Naive thymus-derived CD4-positive, alpha-beta T cell (primary cell): ENCODE measurements at regions of chrX and their contacts with region 1.

Region 1: DNA sequence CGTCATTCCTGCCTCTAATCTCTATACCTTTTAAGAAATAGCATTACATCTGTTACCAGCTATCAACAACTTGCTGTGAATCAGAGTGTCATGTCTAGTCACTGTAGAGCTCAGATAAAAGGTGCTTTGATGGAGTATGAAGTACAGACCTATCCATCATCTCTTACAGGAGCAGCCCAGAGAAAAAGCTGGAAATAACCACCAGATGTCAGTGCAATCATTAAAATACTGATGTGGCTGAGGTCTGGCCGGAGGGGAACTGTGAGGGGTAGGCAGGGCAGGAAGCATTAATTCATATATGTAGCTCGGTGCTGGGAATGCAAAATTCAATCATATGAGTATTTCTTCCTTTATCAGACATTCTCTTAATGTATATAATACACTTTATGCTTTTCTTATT is 100.6 kb downstream of the AKAP4 start:
- DNase-seq: peak in 2 of 9 donors; percentile 2
- ATAC-seq: no peak
- H3K4me3 ChIP-seq: no peak overlapping the region
- H3K4me3 Mint-ChIP-seq: no peak overlapping the region
- H3K27ac ChIP-seq: no peak overlapping the region
- H3K27ac Mint-ChIP-seq: peak overlapping the region in 1 of 9 donors; percentile 1
- H3K4me1 ChIP-seq: no peaks in the 10 kb centered on the region
- H3K4me1 Mint-ChIP-seq: peaks cover 0 to 4% (median 0%) of the 10 kb centered on the region in 7 donors
- H3K27me3 ChIP-seq: no peaks in the 10 kb centered on the region
- H3K27me3 Mint-ChIP-seq: no peaks in the 10 kb centered on the region

Region 2: GRCh38 chrX:50579955-50580354 is 479.8 kb after region 1 on chrX:
- CTCF ChIA-PET with region 1: no interaction called
- POLR2A ChIA-PET with region 1: no interaction called
- intact Hi-C with region 1: loop called in 1 of 2 experiments (anchors 5 kb)
- DNase-seq: peak in 6 of 9 donors; percentile 7 to 45 (median 27)
- ATAC-seq: no peak
- H3K4me3 ChIP-seq: no peak overlapping the region
- H3K4me3 Mint-ChIP-seq: no peak overlapping the region
- H3K27ac ChIP-seq: no peak overlapping the region
- H3K27ac Mint-ChIP-seq: peak overlapping the region in 1 of 9 donors; percentile 2
- H3K4me1 ChIP-seq: no peaks in the 10 kb centered on the region
- H3K4me1 Mint-ChIP-seq: peaks cover 0 to 1% (median 0%) of the 10 kb centered on the region in 7 donors
- H3K27me3 ChIP-seq: no peaks in the 10 kb centered on the region
- H3K27me3 Mint-ChIP-seq: peaks cover 0 to 12% (median 4%) of the 10 kb centered on the region in 5 donors